Caco-2 (cell line): ENCODE measurements at regions of chr2 and their contacts with region 1.

Region 1: DNA sequence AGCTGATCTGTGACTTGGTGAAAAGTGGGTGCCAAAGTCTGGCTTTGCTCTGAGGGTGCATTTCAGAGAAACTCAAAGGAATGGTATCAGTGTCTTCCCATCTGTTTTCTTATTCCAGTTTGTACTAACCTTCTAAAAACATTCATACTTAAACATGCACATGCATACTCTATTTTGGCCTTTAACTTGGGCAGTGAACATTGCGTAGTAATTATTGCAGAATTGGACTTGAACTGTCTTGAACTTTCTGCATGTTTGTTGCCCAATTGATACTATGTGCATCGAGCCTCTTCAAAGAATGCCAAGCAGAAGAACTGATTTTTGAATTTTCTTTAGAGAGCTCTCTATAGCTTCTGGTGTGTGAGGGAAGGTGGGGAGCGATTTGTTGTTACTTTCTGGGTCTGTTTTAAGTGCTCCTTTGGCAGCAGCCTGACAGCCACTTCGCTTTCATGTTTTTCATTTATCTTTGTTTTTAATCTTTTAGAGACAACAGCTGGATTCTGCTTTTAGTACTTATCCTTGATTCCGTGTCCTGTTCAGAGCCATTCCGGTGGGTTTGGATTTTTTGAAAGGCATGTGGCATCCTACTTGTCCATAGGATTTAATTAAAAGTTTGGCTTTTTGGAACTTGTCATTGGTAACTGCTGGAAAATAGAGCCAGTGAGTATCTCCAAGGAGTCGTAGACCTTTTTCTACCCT is 159.2 kb downstream of the RAPGEF4 start:
- DNase-seq: no peak
- H3K4me3 ChIP-seq: no peak overlapping the region
- H3K4me3 Mint-ChIP-seq: no peak overlapping the region
- H3K27ac Mint-ChIP-seq: no peak overlapping the region
- H3K4me1 ChIP-seq: no peaks in the 10 kb centered on the region
- H3K4me1 Mint-ChIP-seq: no peaks in the 10 kb centered on the region
- H3K27me3 ChIP-seq: peaks cover 8% of the 10 kb centered on the region
- H3K27me3 Mint-ChIP-seq: peaks cover 27% of the 10 kb centered on the region
- CTCF ChIP-seq: no peak

Region 2: GRCh38 chr2:172912266-172912665 is 17.4 kb after region 1 on chr2:
- CTCF ChIA-PET with region 1: no interaction called
- POLR2A ChIA-PET with region 1: interaction called, 3 read pairs
- intact Hi-C with region 1: loop called (anchors 2 kb)
- DNase-seq: no peak
- H3K4me3 ChIP-seq: no peak overlapping the region
- H3K4me3 Mint-ChIP-seq: no peak overlapping the region
- H3K27ac Mint-ChIP-seq: no peak overlapping the region
- H3K4me1 ChIP-seq: no peaks in the 10 kb centered on the region
- H3K4me1 Mint-ChIP-seq: no peaks in the 10 kb centered on the region
- H3K27me3 ChIP-seq: no peaks in the 10 kb centered on the region
- H3K27me3 Mint-ChIP-seq: no peaks in the 10 kb centered on the region
- CTCF ChIP-seq: no peak